Natural killer cell (primary cell): ENCODE measurements at regions of chr12 and their contacts with region 1.

Region 1: DNA sequence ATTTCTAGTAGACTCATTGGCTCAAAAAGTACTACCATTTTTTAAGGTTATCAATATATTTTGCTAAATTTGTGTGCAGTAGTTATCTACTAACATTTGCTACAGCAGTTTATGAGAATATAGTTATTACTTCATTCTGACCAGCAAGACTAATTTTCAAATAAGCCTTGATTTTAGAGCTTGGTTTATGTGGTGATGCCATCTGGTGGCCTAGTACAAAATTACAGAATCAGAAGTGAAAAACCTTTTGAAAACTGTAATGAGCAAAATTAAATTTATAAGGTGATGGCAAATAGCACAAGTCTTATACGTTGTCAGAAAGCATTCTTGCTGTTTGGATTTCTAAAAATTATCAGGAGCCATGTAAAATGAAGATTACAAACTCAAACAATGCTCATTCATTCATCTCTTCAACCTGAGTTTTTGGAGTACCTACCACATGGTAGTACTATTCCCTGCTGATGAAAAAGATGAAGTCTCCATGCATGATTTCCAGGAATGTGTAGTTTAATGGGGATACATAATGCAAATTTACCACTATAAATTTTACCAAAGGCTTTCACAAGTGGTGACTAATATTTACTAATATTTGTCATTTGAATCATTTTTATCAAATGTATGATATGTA is 51.0 kb downstream of the MAGOHB start:
- DNase-seq: peak in 1 of 2 donors; percentile 79
- ATAC-seq: peak; percentile 37 to 53 (median 47)
- H3K4me3 ChIP-seq: no peak overlapping the region
- H3K4me3 Mint-ChIP-seq: no peak overlapping the region
- H3K27ac ChIP-seq: no peak overlapping the region
- H3K27ac Mint-ChIP-seq: peak overlapping the region in 1 of 2 donors; percentile 52
- H3K4me1 ChIP-seq: peaks cover 22% of the 10 kb centered on the region
- H3K4me1 Mint-ChIP-seq: peaks cover 38 to 41% of the 10 kb centered on the region in 2 donors
- H3K27me3 ChIP-seq: no peaks in the 10 kb centered on the region
- H3K27me3 Mint-ChIP-seq: no peaks in the 10 kb centered on the region
- CTCF ChIP-seq: peak; percentile 82

Region 2: GRCh38 chr12:10153271-10154144 is 408.9 kb before region 1 on chr12:
- intact Hi-C with region 1: loop called (anchors 1 kb)
- DNase-seq: peak; percentile 61 to 79
- ATAC-seq: peak; percentile 83 to 90 (median 88)
- H3K4me3 ChIP-seq: peak overlapping the region; percentile 64
- H3K4me3 Mint-ChIP-seq: peak overlapping the region; percentile 92
- H3K27ac ChIP-seq: peak overlapping the region; percentile 26
- H3K27ac Mint-ChIP-seq: peak overlapping the region in 1 of 2 donors; percentile 85
- H3K4me1 ChIP-seq: peaks cover 14% of the 10 kb centered on the region
- H3K4me1 Mint-ChIP-seq: peaks cover 15% of the 10 kb centered on the region in 2 donors
- H3K27me3 ChIP-seq: peaks cover 3% of the 10 kb centered on the region
- H3K27me3 Mint-ChIP-seq: peaks cover 7 to 11% of the 10 kb centered on the region in 2 donors
- CTCF ChIP-seq: peak; percentile 86

Region 3: DNA sequence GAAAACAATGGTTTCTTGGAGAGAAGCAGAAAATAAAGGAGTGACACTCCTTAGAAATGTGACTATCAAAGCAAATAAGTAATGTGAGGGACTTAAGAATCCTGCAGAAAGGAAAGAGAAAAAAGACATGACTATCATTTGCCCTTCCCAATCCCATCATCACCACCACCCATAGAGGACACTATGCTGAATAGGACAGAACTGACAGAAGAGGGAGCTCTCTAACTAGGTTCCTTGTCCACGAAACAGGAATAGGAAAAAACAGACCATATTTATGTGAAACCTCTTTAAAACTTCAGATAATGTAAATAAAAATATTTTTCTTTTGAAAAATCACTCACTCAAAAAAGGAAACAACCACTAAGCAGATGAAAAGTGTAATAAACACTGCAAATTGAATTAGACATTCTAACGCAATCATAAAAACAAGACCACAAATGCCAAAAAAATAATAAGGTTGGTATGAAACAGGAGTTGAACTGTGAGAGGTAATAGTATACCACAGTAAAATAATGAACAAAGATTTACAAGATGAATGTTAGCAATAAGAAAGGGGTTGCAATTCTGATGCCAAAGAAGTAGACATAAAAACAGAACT is 230.7 kb before region 1 on chr12:
- intact Hi-C with region 1: loop called (anchors 1 kb)
- DNase-seq: peak in 1 of 2 donors; percentile 68
- ATAC-seq: peak in 2 of 3 donors; percentile 50 to 64
- H3K4me3 ChIP-seq: no peak overlapping the region
- H3K4me3 Mint-ChIP-seq: peak overlapping the region; percentile 21
- H3K27ac ChIP-seq: no peak overlapping the region
- H3K27ac Mint-ChIP-seq: peak overlapping the region; percentile 82 to 85
- H3K4me1 ChIP-seq: peaks cover 4% of the 10 kb centered on the region
- H3K4me1 Mint-ChIP-seq: peaks cover 58 to 75% of the 10 kb centered on the region in 2 donors
- H3K27me3 ChIP-seq: no peaks in the 10 kb centered on the region
- H3K27me3 Mint-ChIP-seq: no peaks in the 10 kb centered on the region
- CTCF ChIP-seq: peak; percentile 51

Region 4: DNA sequence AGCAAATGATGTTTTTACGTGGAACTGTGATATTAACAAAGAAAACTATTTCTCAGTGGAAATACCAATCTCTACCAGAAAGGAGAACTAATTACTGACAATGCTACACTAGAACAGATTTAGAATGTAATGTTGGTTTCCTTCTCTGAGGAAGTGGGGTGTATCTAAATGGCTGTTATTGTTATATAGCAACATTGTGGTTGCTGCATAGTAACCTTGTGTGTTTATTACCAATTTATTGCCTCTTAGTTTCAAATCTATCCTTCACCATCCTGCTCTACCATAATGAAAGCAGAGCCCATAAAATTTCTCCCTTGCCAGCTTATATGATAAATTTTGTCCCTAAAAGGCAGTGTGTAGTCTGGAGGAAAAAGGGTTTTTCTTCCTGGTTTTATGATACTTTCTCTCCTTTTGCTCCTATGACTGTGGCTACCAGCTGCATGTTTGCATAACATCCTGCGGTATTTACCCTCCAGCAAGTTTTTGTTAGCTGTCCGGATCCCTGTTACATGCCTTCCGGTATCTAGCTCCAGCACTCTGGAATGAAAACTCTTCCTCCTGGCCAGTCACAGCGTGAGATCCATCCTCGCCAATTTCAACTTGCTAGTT is 166.9 kb before region 1 on chr12:
- intact Hi-C with region 1: loop called (anchors 5 kb)
- DNase-seq: peak in 1 of 2 donors; percentile 75
- ATAC-seq: peak; percentile 52 to 82 (median 75)
- H3K4me3 ChIP-seq: peak overlapping the region; percentile 5
- H3K4me3 Mint-ChIP-seq: peak overlapping the region; percentile 87
- H3K27ac ChIP-seq: peak overlapping the region; percentile 92
- H3K27ac Mint-ChIP-seq: peak overlapping the region; percentile 97 to 98
- H3K4me1 ChIP-seq: peaks cover 42% of the 10 kb centered on the region
- H3K4me1 Mint-ChIP-seq: peaks cover 63 to 68% of the 10 kb centered on the region in 2 donors
- H3K27me3 ChIP-seq: no peaks in the 10 kb centered on the region
- H3K27me3 Mint-ChIP-seq: no peaks in the 10 kb centered on the region
- CTCF ChIP-seq: no peak

Region 5: DNA sequence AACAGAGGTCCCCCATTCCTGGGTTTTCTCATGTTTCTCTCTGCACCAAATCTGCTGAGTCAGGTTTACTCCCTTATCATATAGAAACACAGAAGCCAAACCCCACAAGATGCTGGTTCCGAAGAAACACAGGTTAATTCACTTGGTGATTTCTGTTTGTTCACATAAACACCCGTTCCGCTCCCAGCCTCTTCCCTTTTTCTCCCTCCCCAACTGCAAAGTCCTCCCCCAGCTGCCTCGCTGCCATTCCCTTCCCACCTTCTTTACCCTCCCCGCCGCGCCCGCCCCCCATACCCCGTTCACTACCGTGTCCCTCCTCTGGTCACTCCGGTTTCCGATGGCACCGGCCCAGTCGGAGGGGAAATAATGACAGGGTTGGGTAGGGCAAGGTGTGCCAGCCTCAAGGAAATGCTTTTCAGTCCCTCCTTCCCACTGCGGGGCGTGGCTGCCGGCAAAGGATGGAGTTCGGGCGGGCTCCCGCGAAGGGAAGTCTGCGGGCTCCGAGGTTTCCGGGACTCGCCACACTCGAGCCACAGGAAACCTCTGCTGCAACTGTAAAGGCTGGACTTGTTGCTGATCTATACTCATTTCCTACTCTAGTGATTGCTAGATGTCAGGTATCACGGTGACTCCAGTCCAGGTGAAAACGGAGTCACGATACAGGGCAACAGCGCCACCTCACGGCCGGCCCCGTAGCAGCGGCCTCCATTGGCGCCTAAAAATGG is 111.4 kb after region 1 on chr12 and contains the start of gene STYK1:
- intact Hi-C with region 1: loop called (anchors 5 kb)
- DNase-seq: peak; percentile 65 to 86
- ATAC-seq: peak; percentile 59 to 80 (median 76)
- H3K4me3 ChIP-seq: peak within 1 kb of the TSS; percentile 34
- H3K4me3 Mint-ChIP-seq: peak within 1 kb of the TSS; percentile 80
- H3K27ac ChIP-seq: peak within 1 kb of the TSS; percentile 40
- H3K27ac Mint-ChIP-seq: peak within 1 kb of the TSS; percentile 64 to 74
- H3K4me1 ChIP-seq: peaks cover 30% of the 10 kb centered on the region
- H3K4me1 Mint-ChIP-seq: peaks cover 42 to 48% of the 10 kb centered on the region in 2 donors
- H3K27me3 ChIP-seq: peaks cover 20% of the 10 kb centered on the region
- H3K27me3 Mint-ChIP-seq: peaks cover 22 to 40% of the 10 kb centered on the region in 2 donors
- CTCF ChIP-seq: peak; percentile 94
- total RNA-seq, gene STYK1: 2.0 to 2.6 (median 2.4) TPM